Sigmoid colon (tissue), 7 donors: ENCODE measurements at regions of chr5 and their contacts with region 1.

Region 1: DNA sequence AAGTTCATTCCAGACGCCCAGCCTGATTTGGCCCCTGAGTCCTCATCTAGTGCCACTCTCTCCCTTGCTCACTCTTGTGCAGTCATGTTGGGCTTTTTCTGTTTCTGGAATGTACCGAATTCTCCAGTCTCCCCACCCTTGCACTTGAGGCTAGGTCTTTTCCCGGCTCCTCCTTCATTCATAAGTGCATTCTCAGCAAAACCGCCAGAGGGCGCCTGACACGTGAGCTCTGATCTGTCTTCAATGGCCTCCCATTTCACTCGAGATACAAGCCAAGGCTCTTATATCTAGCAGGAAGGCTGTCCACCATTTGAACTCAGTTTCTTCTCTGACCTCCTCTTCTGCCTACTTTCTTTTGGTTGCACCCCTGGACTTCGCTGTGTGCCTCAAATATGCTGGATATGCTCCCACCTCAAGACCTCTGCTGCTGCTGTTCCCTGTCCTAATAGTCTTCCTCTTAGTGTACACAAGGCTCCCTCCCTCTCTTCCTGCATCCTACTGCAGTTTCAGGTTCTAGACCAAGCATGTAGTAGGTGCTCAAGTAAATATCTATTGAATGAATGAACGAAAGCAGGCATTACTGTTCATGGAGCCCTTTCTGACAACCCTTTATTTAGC is 568.1 kb upstream of the WWC1 start:
- DNase-seq: peak; percentile 76
- H3K4me3 ChIP-seq: no peak overlapping the region
- H3K27ac ChIP-seq: no peak overlapping the region
- H3K4me1 ChIP-seq: peaks cover 0 to 4% (median 0%) of the 10 kb centered on the region in 4 donors
- H3K27me3 ChIP-seq: no peaks in the 10 kb centered on the region
- CTCF ChIP-seq: peak; percentile 50 to 88 (median 84)
- EP300 ChIP-seq: no peak
- POLR2A ChIP-seq: no peak

Region 2: DNA sequence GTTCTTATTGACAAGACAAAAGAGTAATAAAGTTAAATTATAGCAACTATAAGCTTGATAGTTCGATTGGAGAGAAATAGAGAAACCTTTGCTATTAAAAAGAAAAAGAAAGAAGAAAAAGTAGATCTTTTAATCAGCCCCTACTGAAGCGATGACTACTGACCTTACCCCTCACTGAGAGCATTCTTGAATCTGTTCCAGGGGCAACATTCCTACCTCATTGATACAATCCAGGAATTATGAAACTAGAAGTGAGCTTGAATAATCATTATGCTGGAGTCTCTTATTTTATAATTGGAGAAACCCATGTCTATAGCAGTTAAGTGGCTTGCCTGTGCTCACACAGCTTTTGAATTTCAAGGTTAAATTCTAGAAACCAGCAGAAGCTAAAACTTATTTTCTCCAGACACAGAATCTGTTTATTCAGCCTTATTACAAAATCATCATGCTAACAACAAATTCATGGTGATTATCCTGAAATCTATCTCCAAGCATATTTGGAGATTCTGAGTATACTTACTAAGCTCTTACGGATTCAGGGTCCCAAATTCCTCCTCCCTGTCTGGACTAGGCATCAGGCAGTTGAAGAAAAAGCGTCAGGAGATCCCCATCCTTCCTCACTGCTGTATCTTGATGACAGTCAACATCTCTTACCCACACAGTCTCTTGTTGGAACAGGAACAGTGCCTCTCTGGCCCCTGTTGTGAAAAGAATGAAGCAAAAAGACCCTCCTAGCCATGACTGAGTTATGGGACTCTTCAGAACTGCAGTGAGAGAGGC is 20.5 kb after region 1 on chr5:
- intact Hi-C with region 1: no loop called
- DNase-seq: no peak
- H3K4me3 ChIP-seq: no peak overlapping the region
- H3K27ac ChIP-seq: no peak overlapping the region
- H3K4me1 ChIP-seq: no peaks in the 10 kb centered on the region
- H3K27me3 ChIP-seq: no peaks in the 10 kb centered on the region
- CTCF ChIP-seq: no peak
- EP300 ChIP-seq: no peak
- POLR2A ChIP-seq: no peak

Region 3: GRCh38 chr5:168020542-168021294 is 297.4 kb after region 1 on chr5:
- intact Hi-C with region 1: loop called (anchors 5 kb)
- DNase-seq: no peak
- H3K4me3 ChIP-seq: no peak overlapping the region
- H3K27ac ChIP-seq: no peak overlapping the region
- H3K4me1 ChIP-seq: peaks cover 0 to 22% (median 21%) of the 10 kb centered on the region in 4 donors
- H3K27me3 ChIP-seq: no peaks in the 10 kb centered on the region
- CTCF ChIP-seq: no peak
- EP300 ChIP-seq: no peak
- POLR2A ChIP-seq: no peak

Region 4: GRCh38 chr5:168047043-168047668 is 323.8 kb after region 1 on chr5:
- intact Hi-C with region 1: loop called (anchors 1 kb)
- DNase-seq: peak; percentile 68
- H3K4me3 ChIP-seq: no peak overlapping the region
- H3K27ac ChIP-seq: peak overlapping the region in 2 of 4 donors; percentile 17 to 46
- H3K4me1 ChIP-seq: peaks cover 0 to 13% (median 9%) of the 10 kb centered on the region in 4 donors
- H3K27me3 ChIP-seq: no peaks in the 10 kb centered on the region
- CTCF ChIP-seq: peak in 2 of 4 experiments; percentile 43 to 51
- EP300 ChIP-seq: no peak
- POLR2A ChIP-seq: no peak

Region 5: DNA sequence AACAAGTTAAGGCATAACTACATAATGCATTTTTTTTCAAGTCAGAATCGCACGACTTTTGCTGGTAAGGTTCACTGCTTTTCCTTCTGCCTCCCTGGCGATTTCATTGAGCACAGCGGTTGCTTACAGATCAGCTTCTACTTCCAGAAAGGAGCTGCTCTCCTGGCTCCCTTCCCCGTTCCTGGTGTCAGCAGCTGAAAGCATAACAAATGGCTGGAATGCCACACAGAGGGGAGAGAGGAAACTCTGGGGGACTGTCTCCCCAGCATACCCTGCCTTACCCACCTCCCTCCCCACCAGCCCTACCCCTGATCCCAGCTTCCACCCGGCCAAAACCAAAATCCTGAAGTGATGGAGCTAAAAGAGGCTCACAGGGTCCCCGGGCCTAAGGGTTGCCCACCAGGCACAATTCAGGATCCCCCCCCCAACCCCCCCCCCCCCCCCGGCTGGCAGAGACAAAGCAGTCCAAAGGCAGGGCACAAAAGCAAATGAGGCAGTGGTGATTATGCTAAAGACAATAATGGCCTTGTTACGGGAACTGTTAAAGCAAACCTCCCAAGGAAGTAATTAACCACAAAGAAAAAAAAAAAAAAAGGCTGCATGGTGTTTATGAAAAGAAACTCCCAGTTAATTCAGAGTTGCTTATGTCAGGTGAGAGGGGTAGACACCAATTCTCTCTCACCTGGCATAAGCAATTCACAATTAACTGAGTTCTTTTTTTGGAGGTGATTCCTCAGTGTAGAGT is 442.0 kb after region 1 on chr5:
- intact Hi-C with region 1: no loop called
- DNase-seq: no peak
- H3K4me3 ChIP-seq: no peak overlapping the region
- H3K27ac ChIP-seq: no peak overlapping the region
- H3K4me1 ChIP-seq: peaks cover 0 to 10% (median 5%) of the 10 kb centered on the region in 4 donors
- H3K27me3 ChIP-seq: no peaks in the 10 kb centered on the region
- CTCF ChIP-seq: no peak
- EP300 ChIP-seq: no peak
- POLR2A ChIP-seq: no peak

Region 6: GRCh38 chr5:168219515-168220410 is 496.4 kb after region 1 on chr5:
- intact Hi-C with region 1: loop called (anchors 1 kb)
- DNase-seq: no peak
- H3K4me3 ChIP-seq: no peak overlapping the region
- H3K27ac ChIP-seq: no peak overlapping the region
- H3K4me1 ChIP-seq: peaks cover 0 to 5% (median 0%) of the 10 kb centered on the region in 4 donors
- H3K27me3 ChIP-seq: no peaks in the 10 kb centered on the region
- CTCF ChIP-seq: peak; percentile 66 to 86 (median 79)
- EP300 ChIP-seq: no peak
- POLR2A ChIP-seq: no peak